Lower leg skin (tissue), 4 donors: ENCODE measurements at regions of chr17 and their contacts with region 1.

Region 1: GRCh38 chr17:19753049-19753444 is 4.9 kb upstream of the ALDH3A1 start:
- DNase-seq: peak; percentile 60 to 92
- H3K4me3 ChIP-seq: no peak overlapping the region
- CTCF ChIP-seq: no peak
- POLR2A ChIP-seq: no peak

Region 2: GRCh38 chr17:19362277-19363113 is 390.6 kb before region 1 on chr17 and contains the start of gene B9D1:
- intact Hi-C with region 1: loop called (anchors 10 kb)
- DNase-seq: peak; percentile 90 to 99
- H3K4me3 ChIP-seq: peak within 1 kb of the TSS; percentile 47
- CTCF ChIP-seq: peak in 1 of 3 donors; percentile 96
- POLR2A ChIP-seq: no peak
- total RNA-seq, gene B9D1: 2.4 to 24.5 (median 19.5) TPM

Region 3: GRCh38 chr17:19517699-19518098 is 235.3 kb before region 1 on chr17:
- intact Hi-C with region 1: loop called (anchors 5 kb)
- DNase-seq: no peak
- H3K4me3 ChIP-seq: no peak overlapping the region
- CTCF ChIP-seq: no peak
- POLR2A ChIP-seq: no peak

Region 4: DNA sequence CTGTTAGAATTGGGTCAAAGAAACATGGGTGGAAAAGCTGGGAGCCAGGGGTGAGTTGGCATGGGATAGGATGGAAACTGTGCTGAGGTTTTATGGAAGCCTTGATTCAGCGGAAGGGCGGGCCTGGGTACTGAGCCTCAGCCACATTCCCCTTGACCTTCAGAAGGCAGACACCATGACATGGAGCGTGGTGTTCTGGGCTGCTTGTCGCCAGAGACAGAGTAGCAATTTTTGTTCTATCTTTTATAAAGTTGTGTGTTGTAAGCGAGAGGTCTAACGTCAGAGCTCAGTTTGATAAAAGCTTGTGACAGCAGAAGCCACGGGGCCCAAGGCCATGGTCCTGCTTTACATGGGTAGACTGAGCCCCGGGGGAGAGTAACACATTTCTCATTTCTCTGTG is 169.2 kb before region 1 on chr17:
- intact Hi-C with region 1: no loop called
- DNase-seq: no peak
- H3K4me3 ChIP-seq: no peak overlapping the region
- CTCF ChIP-seq: no peak
- POLR2A ChIP-seq: no peak

Region 5: DNA sequence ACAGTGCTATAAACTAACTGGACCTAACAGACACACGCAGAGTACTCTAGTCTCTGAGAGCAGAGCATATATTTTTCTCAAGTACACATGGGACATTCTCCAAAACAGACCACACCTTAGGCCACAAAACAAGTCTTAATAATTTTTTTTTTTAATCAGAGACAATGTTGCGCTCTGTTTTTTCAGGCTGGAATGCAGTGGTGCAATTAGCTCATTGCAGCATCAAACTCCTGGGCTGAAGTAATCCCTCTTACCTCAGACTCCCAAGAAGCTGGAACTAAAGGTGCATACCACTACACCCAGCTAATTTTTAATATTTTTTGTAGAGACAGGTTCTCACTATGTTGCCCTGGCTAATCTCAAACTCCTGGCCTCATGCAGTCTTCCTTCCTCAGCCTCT is 77.0 kb after region 1 on chr17:
- intact Hi-C with region 1: no loop called
- DNase-seq: no peak
- H3K4me3 ChIP-seq: no peak overlapping the region
- CTCF ChIP-seq: no peak
- POLR2A ChIP-seq: no peak